ENCODE measurements at regions of chr3 and their contacts with region 1.

Region 1: GRCh38 chr3:51982782-51983577 is at the start of gene ACY1:
- DNase-seq: peak; percentile 63 to 81 (median 72)
- H3K4me3 ChIP-seq: peak within 1 kb of the TSS; percentile 87
- H3K4me3 Mint-ChIP-seq: peak within 1 kb of the TSS; percentile 83 to 96 (median 93)
- H3K27ac ChIP-seq: peak within 1 kb of the TSS; percentile 77
- H3K27ac Mint-ChIP-seq: peak within 1 kb of the TSS; percentile 57 to 99 (median 94)
- H3K4me1 ChIP-seq: peaks cover 20% of the 10 kb centered on the region
- H3K4me1 Mint-ChIP-seq: peaks cover 24 to 29% (median 29%) of the 10 kb centered on the region in 3 donors
- H3K27me3 ChIP-seq: no peaks in the 10 kb centered on the region
- H3K27me3 Mint-ChIP-seq: no peaks in the 10 kb centered on the region
- total RNA-seq, gene ACY1: 46.1 to 49.0 TPM

Region 2: GRCh38 chr3:51874889-51875288 is 108.1 kb before region 1 on chr3:
- CTCF ChIA-PET with region 1: no interaction called
- POLR2A ChIA-PET with region 1: no interaction called
- DNase-seq: no peak
- H3K4me3 ChIP-seq: no peak overlapping the region
- H3K4me3 Mint-ChIP-seq: no peak overlapping the region
- H3K27ac ChIP-seq: no peak overlapping the region
- H3K27ac Mint-ChIP-seq: peak overlapping the region in 1 of 8 donors; percentile 72
- H3K4me1 ChIP-seq: no peaks in the 10 kb centered on the region
- H3K4me1 Mint-ChIP-seq: no peaks in the 10 kb centered on the region
- H3K27me3 ChIP-seq: no peaks in the 10 kb centered on the region
- H3K27me3 Mint-ChIP-seq: peaks cover 2 to 34% of the 10 kb centered on the region in 2 donors

Region 3: DNA sequence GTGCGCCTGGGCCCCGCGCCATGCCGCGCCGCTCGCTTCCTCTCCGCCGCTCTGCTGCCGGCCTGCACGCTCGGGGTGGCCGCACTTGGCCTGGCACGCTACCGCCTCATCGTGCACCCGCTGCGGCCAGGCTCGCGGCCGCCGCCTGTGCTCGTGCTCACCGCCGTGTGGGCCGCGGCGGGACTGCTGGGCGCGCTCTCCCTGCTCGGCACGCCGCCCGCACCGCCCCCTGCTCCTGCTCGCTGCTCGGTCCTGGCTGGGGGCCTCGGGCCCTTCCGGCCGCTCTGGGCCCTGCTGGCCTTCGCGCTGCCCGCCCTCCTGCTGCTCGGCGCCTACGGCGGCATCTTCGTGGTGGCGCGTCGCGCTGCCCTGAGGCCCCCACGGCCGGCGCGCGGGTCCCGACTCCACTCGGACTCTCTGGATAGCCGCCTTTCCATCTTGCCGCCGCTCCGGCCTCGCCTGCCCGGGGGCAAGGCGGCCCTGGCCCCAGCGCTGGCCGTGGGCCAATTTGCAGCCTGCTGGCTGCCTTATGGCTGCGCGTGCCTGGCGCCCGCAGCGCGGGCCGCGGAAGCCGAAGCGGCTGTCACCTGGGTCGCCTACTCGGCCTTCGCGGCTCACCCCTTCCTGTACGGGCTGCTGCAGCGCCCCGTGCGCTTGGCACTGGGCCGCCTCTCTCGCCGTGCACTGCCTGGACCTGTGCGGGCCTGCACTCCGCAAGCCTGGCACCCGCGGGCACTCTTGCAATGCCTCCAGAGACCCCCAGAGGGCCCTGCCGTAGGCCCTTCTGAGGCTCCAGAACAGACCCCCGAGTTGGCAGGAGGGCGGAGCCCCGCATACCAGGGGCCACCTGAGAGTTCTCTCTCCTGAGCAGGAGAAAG is 26.8 kb before region 1 on chr3:
- CTCF ChIA-PET with region 1: interaction called, 3 read pairs
- POLR2A ChIA-PET with region 1: interaction called, 14 read pairs
- DNase-seq: peak in 3 of 5 donors; percentile 24 to 55 (median 52)
- H3K4me3 ChIP-seq: peak overlapping the region; percentile 28
- H3K4me3 Mint-ChIP-seq: peak overlapping the region; percentile 15 to 69 (median 50)
- H3K27ac ChIP-seq: no peak overlapping the region
- H3K27ac Mint-ChIP-seq: no peak overlapping the region
- H3K4me1 ChIP-seq: peaks cover 6% of the 10 kb centered on the region
- H3K4me1 Mint-ChIP-seq: peaks cover 5 to 9% (median 6%) of the 10 kb centered on the region in 3 donors
- H3K27me3 ChIP-seq: peaks cover 18% of the 10 kb centered on the region
- H3K27me3 Mint-ChIP-seq: peaks cover 20 to 42% of the 10 kb centered on the region in 2 donors

Region 4: GRCh38 chr3:51995346-51996163 is 12.6 kb after region 1 on chr3 and contains the start of gene RPL29:
- CTCF ChIA-PET with region 1: interaction called, 7 read pairs
- POLR2A ChIA-PET with region 1: interaction called, 12 read pairs
- DNase-seq: peak; percentile 84 to 91 (median 90)
- H3K4me3 ChIP-seq: peak within 1 kb of the TSS; percentile 97
- H3K4me3 Mint-ChIP-seq: peak within 1 kb of the TSS; percentile 94 to 100 (median 100)
- H3K27ac ChIP-seq: peak within 1 kb of the TSS; percentile 91
- H3K27ac Mint-ChIP-seq: peak within 1 kb of the TSS; percentile 91 to 100 (median 100)
- H3K4me1 ChIP-seq: peaks cover 17% of the 10 kb centered on the region
- H3K4me1 Mint-ChIP-seq: peaks cover 30 to 49% (median 46%) of the 10 kb centered on the region in 3 donors
- H3K27me3 ChIP-seq: no peaks in the 10 kb centered on the region
- H3K27me3 Mint-ChIP-seq: peaks cover 0 to 1% of the 10 kb centered on the region in 2 donors
- total RNA-seq, gene RPL29: 1,367 to 1,382 TPM

Region 5: DNA sequence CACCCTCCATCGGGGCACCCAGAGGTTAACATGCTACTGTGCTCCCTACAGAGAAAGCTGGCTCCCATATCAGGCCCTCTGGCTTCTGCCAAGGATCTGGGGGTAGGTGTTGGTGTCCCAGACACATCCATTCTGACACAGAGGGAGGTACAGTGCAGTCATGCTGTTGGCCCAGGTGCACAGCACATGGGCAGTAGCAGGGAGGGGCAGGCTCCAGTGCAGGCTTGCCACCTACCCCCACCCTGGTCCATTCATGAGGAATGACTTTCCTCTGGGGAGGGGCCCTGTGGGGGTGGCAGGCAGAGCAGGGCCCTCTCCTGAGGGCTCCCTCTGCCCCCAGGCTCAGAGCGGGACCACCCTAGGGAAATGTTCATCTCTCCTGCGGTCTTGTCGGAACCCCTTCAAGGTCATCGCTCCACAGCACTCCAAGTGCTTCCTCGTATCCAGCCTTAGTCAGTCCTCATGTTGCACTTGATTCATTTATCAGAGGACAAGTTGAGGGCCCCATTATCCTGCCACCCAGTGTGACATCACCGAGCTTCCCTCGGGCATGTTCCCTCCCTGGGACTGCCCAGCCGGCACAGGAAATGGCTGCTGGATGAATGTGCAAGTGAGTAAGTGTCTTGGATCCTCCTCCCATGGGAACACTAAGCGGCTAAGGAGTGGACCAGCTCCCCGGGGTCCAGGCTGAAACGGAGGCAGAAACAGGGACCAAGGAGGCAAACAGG is 63.4 kb after region 1 on chr3:
- CTCF ChIA-PET with region 1: no interaction called
- POLR2A ChIA-PET with region 1: no interaction called
- DNase-seq: no peak
- H3K4me3 ChIP-seq: no peak overlapping the region
- H3K4me3 Mint-ChIP-seq: no peak overlapping the region
- H3K27ac ChIP-seq: no peak overlapping the region
- H3K27ac Mint-ChIP-seq: peak overlapping the region; percentile 7 to 86 (median 72)
- H3K4me1 ChIP-seq: peaks cover 37% of the 10 kb centered on the region
- H3K4me1 Mint-ChIP-seq: peaks cover 22 to 59% (median 32%) of the 10 kb centered on the region in 3 donors
- H3K27me3 ChIP-seq: no peaks in the 10 kb centered on the region
- H3K27me3 Mint-ChIP-seq: peaks cover 0 to 2% of the 10 kb centered on the region in 2 donors